ENCODE measurements at regions of chr17 and their contacts with region 1.

Region 1: GRCh38 chr17:82351716-82352488 is 7.1 kb upstream of the TEX19 start:
- DNase-seq: peak; percentile 97
- H3K4me3 ChIP-seq: no peak overlapping the region; a peak in 1 of 4 replicates
- H3K27ac ChIP-seq: no peak overlapping the region
- H3K4me1 ChIP-seq: peaks cover 0 to 10% of the 10 kb centered on the region in 2 experiments; a peak in 1 of 4 replicates
- H3K27me3 ChIP-seq: no peaks in the 10 kb centered on the region; the same call in 1 of the 2 replicates
- CTCF ChIP-seq: peak; percentile 99
- EP300 ChIP-seq: peak in 1 of 2 experiments; percentile 41; a peak in 1 of 4 replicates
- RAD21 ChIP-seq: peak; percentile 99

Region 2: DNA sequence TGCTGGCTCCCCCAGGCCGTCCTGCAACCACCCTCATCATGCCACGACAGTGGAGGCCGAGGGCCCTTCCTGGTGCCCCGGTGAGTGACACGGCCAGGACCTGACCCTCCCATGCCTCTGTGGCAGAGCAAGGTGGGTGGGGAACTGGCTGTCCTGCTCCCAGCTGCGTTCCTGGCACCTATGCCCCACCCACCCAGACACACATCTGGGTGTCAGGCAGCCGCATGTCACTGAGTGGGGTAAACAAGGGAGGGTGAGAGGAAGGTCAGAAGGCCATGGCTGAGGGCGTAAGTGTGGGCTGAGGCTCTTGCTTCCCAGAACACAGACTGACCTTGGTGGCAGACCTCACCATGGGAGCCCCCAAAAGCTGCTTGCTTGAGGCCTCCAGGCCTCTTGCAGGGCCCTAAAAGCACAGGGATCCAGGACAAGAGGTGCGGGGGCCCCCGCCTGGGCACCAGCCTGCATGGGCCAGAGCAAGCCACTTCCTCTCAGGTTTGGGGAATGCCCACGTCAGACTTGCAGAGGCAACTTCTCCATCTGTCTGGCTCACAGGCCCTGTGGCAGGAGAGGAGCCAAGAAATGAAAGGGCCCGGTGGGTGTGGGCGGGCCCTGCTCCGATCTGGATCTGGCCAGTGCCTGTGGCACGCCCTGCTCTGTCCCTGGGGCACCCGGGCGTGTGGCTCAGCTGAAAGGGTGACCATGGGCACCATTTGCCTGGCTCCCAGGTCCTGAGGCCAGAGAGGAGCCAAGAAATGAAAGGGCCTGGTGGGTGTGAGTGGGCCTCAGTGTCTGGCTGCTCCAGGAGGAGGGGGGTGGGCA is 135.4 kb before region 1 on chr17:
- CTCF ChIA-PET with region 1: no interaction called
- POLR2A ChIA-PET with region 1: no interaction called
- DNase-seq: peak; percentile 54
- H3K4me3 ChIP-seq: no peak overlapping the region
- H3K27ac ChIP-seq: peak overlapping the region; percentile 83 to 94
- H3K4me1 ChIP-seq: peaks cover 34 to 40% of the 10 kb centered on the region in 2 experiments
- H3K27me3 ChIP-seq: no peaks in the 10 kb centered on the region
- CTCF ChIP-seq: no peak
- EP300 ChIP-seq: no peak
- RAD21 ChIP-seq: no peak

Region 3: DNA sequence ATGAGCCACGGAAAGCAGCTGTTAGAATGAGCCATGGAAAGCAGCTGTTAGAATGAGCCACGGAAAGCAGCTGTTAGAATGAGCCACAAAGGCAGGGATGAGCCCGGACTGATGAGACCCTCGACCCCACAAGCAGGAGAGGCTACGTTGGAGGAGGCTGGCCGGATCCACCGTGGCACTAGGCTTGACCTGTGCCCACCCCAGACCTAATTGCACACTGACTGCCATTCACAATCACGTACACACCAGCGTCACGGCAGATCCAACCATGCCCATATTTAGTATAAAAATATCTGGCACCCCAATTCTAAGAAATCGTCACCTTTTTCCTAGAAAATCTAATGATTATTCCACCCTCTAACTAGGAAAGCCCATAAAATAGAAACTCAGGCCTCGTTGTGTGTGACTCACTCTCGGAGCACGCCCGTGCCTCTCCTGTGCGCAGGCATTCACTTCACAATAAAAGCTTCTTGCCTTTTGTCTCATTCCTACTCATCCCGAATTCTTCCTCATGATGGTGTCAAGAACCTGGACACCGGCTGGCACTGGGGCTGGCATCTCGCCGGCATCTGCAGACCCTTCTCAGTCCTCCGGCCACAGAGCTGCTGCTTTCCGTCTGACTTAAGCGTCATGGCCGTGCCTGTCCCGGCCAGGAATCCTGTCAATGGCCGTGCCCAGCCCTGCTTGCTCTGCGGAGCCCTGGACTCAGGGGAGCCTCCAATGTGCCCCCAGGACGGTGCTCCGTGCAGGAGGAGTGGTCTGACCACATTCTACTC is 12.9 kb before region 1 on chr17:
- CTCF ChIA-PET with region 1: interaction called, 52 read pairs
- POLR2A ChIA-PET with region 1: no interaction called
- DNase-seq: no peak
- H3K4me3 ChIP-seq: peak overlapping the region; percentile 29 to 30; a peak in 3 of 4 replicates
- H3K27ac ChIP-seq: peak overlapping the region; percentile 16 to 40
- H3K4me1 ChIP-seq: peaks cover 4 to 15% of the 10 kb centered on the region in 2 experiments; a peak in 2 of 4 replicates
- H3K27me3 ChIP-seq: no peaks in the 10 kb centered on the region
- CTCF ChIP-seq: no peak
- EP300 ChIP-seq: no peak; a peak in 1 of 4 replicates
- RAD21 ChIP-seq: no peak

Region 4: DNA sequence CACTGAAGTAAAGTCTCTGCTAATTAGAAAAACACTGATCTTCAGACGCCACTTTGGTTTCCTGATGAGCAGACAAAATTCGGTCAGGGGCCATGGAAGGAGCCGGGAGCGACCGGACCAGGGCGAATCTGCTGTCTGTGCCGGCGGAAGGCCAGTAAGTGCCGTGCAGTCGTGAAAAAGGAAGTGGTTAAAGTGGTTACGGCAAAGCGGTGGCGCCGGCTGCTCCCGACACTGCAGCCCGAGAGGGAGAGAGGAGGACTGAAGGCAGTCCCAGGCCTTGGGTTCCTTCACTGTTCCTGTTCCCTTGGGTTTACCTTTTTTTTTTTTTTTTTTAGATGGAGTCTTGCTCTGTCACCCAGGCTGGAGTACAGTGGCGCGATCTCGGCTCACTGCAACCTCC is 48.9 kb after region 1 on chr17:
- CTCF ChIA-PET with region 1: interaction called, 45 read pairs
- POLR2A ChIA-PET with region 1: no interaction called
- DNase-seq: no peak
- H3K4me3 ChIP-seq: no peak overlapping the region
- H3K27ac ChIP-seq: no peak overlapping the region
- H3K4me1 ChIP-seq: peaks cover 9 to 35% of the 10 kb centered on the region in 2 experiments; a peak in 3 of 4 replicates
- H3K27me3 ChIP-seq: no peaks in the 10 kb centered on the region
- CTCF ChIP-seq: no peak
- EP300 ChIP-seq: no peak
- RAD21 ChIP-seq: no peak

Region 5: DNA sequence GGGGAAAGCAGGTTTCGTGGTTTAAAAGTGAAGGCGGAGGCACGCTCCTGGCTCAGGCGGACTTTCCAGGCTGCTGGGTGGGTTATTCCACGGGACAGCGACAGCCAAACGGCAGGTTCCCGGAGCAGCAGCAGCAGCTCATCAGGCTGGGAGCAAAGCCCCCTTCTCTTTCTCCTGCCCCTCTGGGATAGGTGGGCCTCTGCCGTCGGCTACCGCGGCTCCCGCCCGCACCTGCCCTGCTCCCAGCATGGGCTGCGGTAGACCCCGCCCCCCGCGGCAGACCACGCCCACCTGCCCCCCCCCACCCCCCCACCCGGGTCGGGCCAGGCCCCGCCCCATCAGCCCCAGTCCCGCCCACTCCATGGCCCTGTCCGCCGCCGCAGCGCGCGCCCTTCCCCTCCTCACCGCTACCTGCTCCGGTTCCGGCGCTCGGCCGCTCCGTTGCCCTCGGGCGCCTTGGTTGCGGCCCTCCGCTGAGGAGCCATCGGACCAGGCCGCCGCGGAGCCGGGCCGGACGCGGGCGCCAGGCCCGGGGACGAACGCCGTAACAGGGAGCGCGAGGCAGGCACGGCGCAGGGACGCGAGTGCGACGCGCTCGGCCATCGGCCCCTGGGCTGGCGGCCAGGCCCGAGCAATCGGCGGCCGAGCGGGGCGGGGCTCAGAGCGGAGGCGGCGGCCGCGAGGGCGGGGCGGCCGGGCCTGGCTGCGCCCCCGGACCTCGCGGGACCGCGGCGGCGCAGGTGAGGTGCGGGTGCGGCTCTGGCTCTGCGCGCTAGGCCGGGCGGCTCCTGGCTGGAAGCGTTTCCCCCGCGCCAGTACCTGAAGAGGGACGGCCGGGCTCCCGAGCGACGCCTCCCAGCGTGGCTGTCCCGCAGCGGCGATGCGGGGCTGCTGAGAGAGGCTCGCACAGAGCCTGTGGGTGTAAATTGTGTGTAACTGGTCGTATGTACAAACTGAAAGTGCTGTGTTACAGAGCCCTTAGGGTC is 66.4 kb after region 1 on chr17 and contains the starts of genes HEXD and OGFOD3:
- CTCF ChIA-PET with region 1: interaction called, 124 read pairs
- POLR2A ChIA-PET with region 1: no interaction called
- DNase-seq: peak; percentile 100
- H3K4me3 ChIP-seq: peak within 1 kb of the TSS; percentile 71 to 94
- H3K27ac ChIP-seq: peak within 1 kb of the TSS; percentile 45 to 90; a peak in 3 of 4 replicates
- H3K4me1 ChIP-seq: peaks cover 0 to 3% of the 10 kb centered on the region in 2 experiments; a peak in 2 of 4 replicates
- H3K27me3 ChIP-seq: no peaks in the 10 kb centered on the region
- CTCF ChIP-seq: no peak
- EP300 ChIP-seq: no peak; a peak in 1 of 4 replicates
- RAD21 ChIP-seq: no peak
- polyA plus RNA-seq, gene HEXD: 38.8 and 43.1 TPM in 2 replicates
- polyA plus RNA-seq, gene OGFOD3: 57.1 and 68.2 TPM in 2 replicates

Region 6: DNA sequence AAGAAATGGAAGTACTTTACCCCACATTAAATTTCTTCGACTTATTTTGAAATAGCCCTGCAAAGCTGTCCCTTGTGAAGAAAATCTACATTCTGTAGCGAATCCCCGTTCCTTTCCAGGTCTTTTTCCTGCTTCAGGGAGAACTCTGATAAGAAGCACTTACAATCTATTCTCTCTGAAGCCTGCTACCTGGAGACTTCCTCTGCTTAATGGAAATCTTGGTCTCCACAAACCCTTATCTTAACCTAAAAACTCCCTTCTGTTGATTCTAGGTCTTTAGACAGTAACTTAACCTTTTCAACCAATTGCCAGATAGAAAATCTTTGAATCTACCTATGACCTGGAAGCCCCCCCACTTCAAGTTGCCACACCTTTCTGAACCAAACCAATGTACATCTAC is 100.3 kb after region 1 on chr17:
- CTCF ChIA-PET with region 1: no interaction called
- POLR2A ChIA-PET with region 1: no interaction called
- DNase-seq: no peak
- H3K4me3 ChIP-seq: no peak overlapping the region
- H3K27ac ChIP-seq: no peak overlapping the region
- H3K4me1 ChIP-seq: peaks cover 8 to 18% of the 10 kb centered on the region in 2 experiments; a peak in 2 of 4 replicates
- H3K27me3 ChIP-seq: no peaks in the 10 kb centered on the region
- CTCF ChIP-seq: no peak
- EP300 ChIP-seq: no peak
- RAD21 ChIP-seq: no peak